GM18951 (cell line): ENCODE measurements at regions of chr10 and their contacts with region 1.

Region 1: DNA sequence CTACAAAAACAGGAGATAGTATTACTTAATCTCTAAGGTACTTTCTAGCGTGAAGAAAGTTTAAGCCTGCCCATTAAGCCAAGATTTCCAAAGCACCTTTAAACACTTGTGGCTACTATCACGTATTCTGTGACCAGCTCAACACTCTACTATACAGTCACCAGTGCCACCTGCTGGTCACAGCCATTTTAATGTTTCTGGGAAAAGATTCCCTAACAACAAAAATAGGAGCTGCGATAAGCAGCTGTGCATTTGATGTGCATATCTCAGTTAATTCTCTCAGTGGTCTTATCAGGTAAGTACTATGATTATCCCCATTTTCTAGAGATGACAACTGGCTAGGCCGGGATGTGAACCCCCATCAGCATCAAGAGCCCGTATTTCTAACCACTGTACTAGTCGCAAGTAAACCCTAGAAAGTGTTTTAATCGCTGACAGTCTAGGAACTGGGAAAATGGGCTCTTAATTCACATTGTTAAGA is 860 bp downstream of the SEC31B start:
- POLR2A ChIP-seq: no peak

Region 2: GRCh38 chr10:100346765-100347567 is 171.8 kb before region 1 on chr10 and contains the start of gene SCD:
- in situ Hi-C with region 1: loop called (anchors 10 kb)
- POLR2A ChIP-seq: peak; percentile 83

Region 3: DNA sequence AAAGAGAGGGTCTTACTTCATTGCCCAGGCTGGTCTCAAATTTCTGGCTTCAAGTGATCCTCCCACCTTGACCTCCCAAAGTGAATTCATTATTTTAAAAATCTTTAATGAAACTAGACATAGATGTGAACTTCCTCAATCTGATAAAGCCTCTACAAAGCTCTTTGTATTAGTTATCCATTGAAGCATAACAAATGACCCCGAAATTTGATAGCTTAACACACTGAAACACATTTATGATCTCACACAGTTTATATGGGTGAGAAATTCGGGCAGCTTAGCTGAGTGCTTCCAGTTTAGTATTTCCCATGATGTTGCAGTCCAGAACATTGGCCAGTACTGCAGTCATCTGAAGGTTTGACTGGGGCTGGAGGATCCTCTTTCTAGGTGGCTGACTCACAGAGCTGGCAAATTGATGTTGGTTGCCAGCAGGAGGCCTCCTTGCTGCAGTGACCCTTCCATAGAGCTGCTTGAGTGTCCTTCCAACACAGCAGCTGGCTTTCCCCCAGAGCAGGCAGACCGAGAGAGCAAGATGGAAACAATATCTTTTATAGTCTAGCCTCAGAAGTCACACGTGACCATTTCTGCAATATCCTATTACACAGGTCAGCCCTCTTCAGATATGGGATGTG is 72.6 kb before region 1 on chr10:
- in situ Hi-C with region 1: loop called (anchors 10 kb)
- POLR2A ChIP-seq: no peak